K562 (cell line): ENCODE measurements at regions of chr1 and their contacts with region 1.

Region 1: DNA sequence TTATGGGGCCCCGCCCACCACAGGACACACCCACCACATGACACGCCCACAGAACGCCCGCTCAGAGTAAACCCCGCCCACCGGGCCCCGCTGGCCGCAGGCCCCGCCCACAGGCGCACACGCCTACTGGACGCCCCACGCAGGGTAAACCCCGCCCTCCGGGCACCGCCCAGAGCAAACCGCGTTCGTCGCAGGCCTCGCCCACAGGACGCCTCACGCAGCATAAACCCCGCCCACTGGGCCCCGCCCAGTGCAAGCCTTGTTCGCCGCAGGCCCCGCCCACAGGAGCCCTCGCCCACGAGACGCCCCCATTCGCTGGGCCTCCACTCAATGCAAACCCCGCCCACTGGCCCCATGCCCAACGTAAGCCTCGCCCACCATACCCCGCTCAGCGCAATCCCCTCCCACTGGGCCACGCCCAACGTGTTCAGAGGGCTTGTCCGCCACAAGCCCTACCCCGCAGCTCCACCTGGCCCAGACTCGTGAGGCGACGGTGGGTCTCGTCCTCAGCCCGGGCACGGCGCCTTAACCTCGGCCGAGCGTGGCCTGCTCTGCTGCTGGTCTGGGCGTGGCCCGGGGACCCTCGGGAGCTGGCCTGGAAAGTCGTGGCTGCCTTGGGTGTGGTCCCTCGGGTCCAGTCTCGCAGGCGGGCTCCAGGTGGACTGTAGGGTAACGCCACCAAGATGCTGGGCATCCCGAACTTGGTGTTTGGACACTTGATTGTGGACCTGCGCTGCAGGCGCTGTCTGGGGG is 401 bp upstream of the TMEM52 start:
- DNase-seq: peak; percentile 100
- ATAC-seq: peak; percentile 90
- H3K4me3 ChIP-seq: peak overlapping the region; percentile 51
- H3K27ac ChIP-seq: no peak overlapping the region
- H3K4me1 ChIP-seq: peaks cover 9 to 87% of the 10 kb centered on the region in 2 experiments; a peak in 4 of 5 replicates
- H3K27me3 ChIP-seq: peaks cover 1 to 12% of the 10 kb centered on the region in 2 experiments; a peak in 4 of 5 replicates
- CTCF ChIP-seq: no peak; a peak in 1 of 6 replicates
- EP300 ChIP-seq: 0 out of 2 replicates have a peak, but pooled peaks have one; percentile 6
- POLR2A ChIP-seq: no peak
- RAD21 ChIP-seq: no peak

Region 2: DNA sequence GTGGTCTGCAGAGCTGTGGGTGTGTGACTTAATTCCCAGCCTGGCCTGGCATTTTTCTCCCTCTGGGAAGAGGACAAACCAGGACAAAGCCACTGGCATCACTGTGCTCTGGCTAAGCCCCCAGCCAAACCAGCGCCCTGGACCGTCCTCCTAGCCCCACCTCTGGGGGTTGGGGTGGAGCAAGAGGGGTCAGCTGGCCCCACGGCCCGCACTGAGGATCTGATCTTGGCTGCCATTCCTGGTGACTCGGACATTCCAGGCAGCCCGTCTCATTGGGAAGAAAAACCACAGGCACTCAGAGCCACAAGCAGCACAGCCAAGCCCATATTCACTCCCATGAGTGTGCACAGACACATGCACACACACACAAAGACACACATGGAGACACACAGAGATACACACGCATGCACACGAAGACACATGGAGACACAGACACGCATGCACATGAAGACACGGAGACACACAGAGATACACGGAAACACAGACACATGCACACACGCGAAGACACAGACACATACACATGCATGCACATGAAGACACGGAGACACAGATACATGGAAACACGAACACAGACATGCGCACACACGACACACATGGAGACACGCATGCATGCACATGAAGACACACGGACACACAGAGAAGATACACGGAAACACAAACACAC is 558.8 kb before region 1 on chr1:
- CTCF ChIA-PET with region 1: no interaction called
- POLR2A ChIA-PET with region 1: no interaction called
- in situ Hi-C with region 1: loop called (anchors 10 kb)
- intact Hi-C with region 1: no loop called
- DNase-seq: no peak
- ATAC-seq: no peak
- H3K4me3 ChIP-seq: no peak overlapping the region
- H3K27ac ChIP-seq: no peak overlapping the region; the same call in 2 of the 3 replicates
- H3K4me1 ChIP-seq: peaks cover 19 to 64% of the 10 kb centered on the region in 2 experiments
- H3K27me3 ChIP-seq: no peaks in the 10 kb centered on the region; a peak in 1 of 5 replicates
- CTCF ChIP-seq: no peak
- EP300 ChIP-seq: no peak
- POLR2A ChIP-seq: no peak
- RAD21 ChIP-seq: no peak